Naive thymus-derived CD4-positive, alpha-beta T cell (primary cell): ENCODE measurements at regions of chr3 and their contacts with region 1.

Region 1: DNA sequence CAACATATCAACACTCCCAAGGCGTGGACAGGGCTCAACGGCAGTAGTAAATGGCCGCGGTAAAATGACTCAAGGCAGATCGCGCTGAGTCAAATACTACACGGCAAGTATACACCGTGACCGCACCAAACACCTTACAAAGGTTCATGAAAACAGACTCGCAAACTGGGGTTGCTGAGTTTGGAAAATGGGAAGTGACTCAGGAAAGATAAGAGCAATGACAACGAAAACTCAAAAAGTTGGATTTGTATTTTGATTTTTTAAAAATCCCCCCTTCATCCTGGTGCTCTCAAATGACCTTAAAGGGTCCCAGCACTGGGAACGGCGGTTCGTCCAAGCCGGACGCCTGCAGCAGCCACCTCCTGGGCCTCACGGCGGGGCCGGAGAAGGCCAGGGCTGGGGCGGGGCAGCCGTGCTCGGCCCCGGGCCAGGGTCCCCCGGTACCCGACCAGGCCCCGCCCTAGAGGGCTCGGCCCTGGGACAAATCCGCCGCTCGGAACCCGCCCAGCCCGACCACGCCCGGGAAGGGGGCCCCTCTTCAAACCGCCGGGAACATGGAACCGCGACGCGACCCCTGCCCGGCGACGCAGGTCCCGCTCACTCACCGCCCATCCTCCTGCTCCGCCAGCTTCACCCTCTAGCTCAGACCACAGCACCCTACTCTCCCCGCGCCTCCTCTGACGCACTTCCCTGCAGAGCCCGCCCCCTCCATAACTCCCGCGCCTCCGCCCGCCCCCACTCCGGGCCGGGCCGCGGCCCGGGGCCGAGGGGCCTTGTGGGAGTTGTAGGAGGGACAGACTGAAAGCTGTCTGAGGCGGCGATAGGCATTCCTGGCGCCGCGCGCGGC is at the start of gene CLDND1:
- DNase-seq: peak; percentile 88 to 94 (median 93)
- ATAC-seq: peak; percentile 99
- H3K4me3 ChIP-seq: peak within 1 kb of the TSS; percentile 68
- H3K4me3 Mint-ChIP-seq: peak within 1 kb of the TSS; percentile 83 to 99 (median 92)
- H3K27ac ChIP-seq: peak within 1 kb of the TSS; percentile 90
- H3K27ac Mint-ChIP-seq: peak within 1 kb of the TSS; percentile 67 to 99 (median 96)
- H3K4me1 ChIP-seq: peaks cover 16 to 27% of the 10 kb centered on the region in 2 donors
- H3K4me1 Mint-ChIP-seq: peaks cover 31 to 62% (median 53%) of the 10 kb centered on the region in 7 donors
- H3K27me3 ChIP-seq: no peaks in the 10 kb centered on the region
- H3K27me3 Mint-ChIP-seq: no peaks in the 10 kb centered on the region
- total RNA-seq, gene CLDND1: 100 to 478 (median 132) TPM

Region 2: DNA sequence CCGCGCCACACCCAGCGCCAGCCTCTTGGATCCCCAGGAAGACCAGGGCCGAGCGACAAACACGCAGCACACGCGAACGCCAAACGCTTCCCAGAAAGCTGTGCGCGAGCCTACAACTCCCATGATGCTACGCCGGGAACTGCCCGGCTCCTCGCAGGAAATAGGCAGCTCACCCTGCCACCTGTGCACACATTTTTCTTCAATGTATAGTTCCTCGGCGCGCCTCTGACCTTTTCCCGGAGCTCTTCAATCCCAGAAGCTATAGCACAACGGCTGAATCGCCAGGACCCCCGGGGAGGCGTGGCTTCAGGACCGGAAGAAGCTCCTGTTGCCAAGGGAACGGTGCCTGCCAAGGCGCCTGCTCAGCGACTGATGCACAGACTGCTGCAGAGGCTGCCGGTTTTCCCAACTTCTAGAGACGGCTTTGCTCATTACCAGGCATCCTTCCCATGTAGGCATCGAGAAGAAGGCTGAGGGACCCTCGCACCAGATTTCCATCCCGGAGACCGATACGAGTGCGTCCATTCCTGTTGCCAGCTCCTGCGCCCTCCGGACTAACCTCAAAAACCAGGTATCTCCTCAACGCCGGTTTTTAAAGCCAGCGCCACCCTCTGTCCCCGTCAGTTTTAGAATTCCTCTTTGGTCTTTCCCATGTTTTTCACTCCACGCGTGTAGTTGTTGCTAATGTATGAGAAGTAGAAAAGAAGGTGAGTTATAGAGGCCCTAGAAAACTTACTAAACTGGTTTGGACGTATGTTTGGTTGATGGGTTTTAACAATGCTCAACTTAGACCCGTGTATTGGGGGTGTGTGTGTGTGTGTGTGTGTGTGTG is 757.8 kb before region 1 on chr3 and contains the start of gene ARL6:
- CTCF ChIA-PET with region 1: no interaction called
- POLR2A ChIA-PET with region 1: interaction called, 4 read pairs
- intact Hi-C with region 1: loop called (anchors 1 kb)
- DNase-seq: peak; percentile 53 to 78 (median 73)
- ATAC-seq: peak; percentile 95
- H3K4me3 ChIP-seq: peak within 1 kb of the TSS; percentile 98
- H3K4me3 Mint-ChIP-seq: peak within 1 kb of the TSS; percentile 91 to 99 (median 98)
- H3K27ac ChIP-seq: peak within 1 kb of the TSS; percentile 78
- H3K27ac Mint-ChIP-seq: peak within 1 kb of the TSS; percentile 90 to 97 (median 93)
- H3K4me1 ChIP-seq: peaks cover 5 to 15% of the 10 kb centered on the region in 2 donors
- H3K4me1 Mint-ChIP-seq: peaks cover 9 to 36% (median 27%) of the 10 kb centered on the region in 7 donors
- H3K27me3 ChIP-seq: no peaks in the 10 kb centered on the region
- H3K27me3 Mint-ChIP-seq: peaks cover 0 to 4% (median 0%) of the 10 kb centered on the region in 5 donors
- total RNA-seq, gene ARL6: 3.0 to 7.5 (median 5.8) TPM

Region 3: GRCh38 chr3:98343647-98344507 is 178.6 kb before region 1 on chr3:
- CTCF ChIA-PET with region 1: no interaction called
- POLR2A ChIA-PET with region 1: no interaction called
- intact Hi-C with region 1: loop called in 1 of 2 experiments (anchors 5 kb)
- DNase-seq: peak in 4 of 9 donors; percentile 7 to 25 (median 18)
- ATAC-seq: no peak
- H3K4me3 ChIP-seq: no peak overlapping the region
- H3K4me3 Mint-ChIP-seq: no peak overlapping the region
- H3K27ac ChIP-seq: no peak overlapping the region
- H3K27ac Mint-ChIP-seq: no peak overlapping the region
- H3K4me1 ChIP-seq: no peaks in the 10 kb centered on the region
- H3K4me1 Mint-ChIP-seq: peaks cover 0 to 10% (median 0%) of the 10 kb centered on the region in 7 donors
- H3K27me3 ChIP-seq: no peaks in the 10 kb centered on the region
- H3K27me3 Mint-ChIP-seq: peaks cover 3 to 60% (median 6%) of the 10 kb centered on the region in 5 donors

Region 4: DNA sequence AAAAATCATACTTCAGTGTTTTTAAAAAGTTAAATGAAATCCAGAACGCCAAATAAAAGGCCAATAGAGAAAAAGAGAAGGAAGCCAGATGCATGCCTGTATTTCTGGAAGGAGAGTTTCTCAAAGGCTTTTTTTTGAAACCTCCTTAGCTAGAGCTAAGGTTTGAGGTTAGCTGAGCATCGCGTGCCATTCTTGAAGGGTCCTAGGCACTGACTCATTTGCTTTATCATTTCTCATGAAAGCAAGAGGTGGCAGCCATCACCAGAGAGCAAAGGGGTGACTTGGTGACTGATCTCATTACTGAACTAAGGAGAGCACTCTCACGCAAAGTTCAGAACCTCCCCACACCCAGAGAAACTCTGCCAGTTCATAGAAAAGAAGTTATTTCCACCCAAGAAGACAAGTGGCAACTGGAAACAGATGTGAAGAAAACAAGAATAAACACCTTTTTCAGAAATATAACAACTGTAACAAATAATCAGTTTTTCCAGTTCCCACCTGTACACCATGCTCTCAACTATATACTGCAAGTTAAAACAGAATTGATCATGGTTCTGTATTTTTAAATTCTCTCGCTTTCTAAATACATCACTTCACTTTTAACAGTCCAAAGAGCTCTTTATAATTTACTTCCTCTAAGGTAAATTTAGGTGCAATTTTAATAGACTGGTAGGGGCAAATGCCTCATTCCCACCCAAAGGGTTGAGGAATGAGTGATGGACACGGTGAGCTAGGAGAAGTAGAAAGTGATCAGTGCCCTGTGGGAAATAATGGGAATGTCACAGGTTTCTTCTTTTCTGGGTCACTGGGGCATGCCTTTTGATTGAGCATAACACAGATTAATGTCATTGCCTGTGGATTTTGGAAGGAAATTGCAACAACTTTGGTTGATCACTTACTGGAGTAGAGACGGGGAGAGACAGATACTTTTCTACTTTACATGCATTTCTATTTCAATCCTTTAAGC is 34.0 kb after region 1 on chr3:
- CTCF ChIA-PET with region 1: no interaction called
- POLR2A ChIA-PET with region 1: interaction called, 9 read pairs
- intact Hi-C with region 1: loop called (anchors 1 kb)
- DNase-seq: peak in 2 of 9 donors; percentile 19 to 58
- ATAC-seq: peak; percentile 77
- H3K4me3 ChIP-seq: no peak overlapping the region
- H3K4me3 Mint-ChIP-seq: peak overlapping the region in 3 of 10 donors; percentile 9 to 83 (median 30)
- H3K27ac ChIP-seq: no peak overlapping the region
- H3K27ac Mint-ChIP-seq: peak overlapping the region in 5 of 9 donors; percentile 5 to 98 (median 40)
- H3K4me1 ChIP-seq: peaks cover 0 to 56% of the 10 kb centered on the region in 2 donors
- H3K4me1 Mint-ChIP-seq: peaks cover 6 to 84% (median 23%) of the 10 kb centered on the region in 7 donors
- H3K27me3 ChIP-seq: no peaks in the 10 kb centered on the region
- H3K27me3 Mint-ChIP-seq: peaks cover 0 to 5% (median 0%) of the 10 kb centered on the region in 5 donors

Region 5: GRCh38 chr3:98901392-98902350 is 379.2 kb after region 1 on chr3 and contains the start of gene DCBLD2:
- CTCF ChIA-PET with region 1: no interaction called
- POLR2A ChIA-PET with region 1: no interaction called
- intact Hi-C with region 1: loop called (anchors 1 to 5 kb)
- DNase-seq: peak; percentile 90 to 96 (median 94)
- ATAC-seq: peak; percentile 99
- H3K4me3 ChIP-seq: peak within 1 kb of the TSS; percentile 86
- H3K4me3 Mint-ChIP-seq: peak within 1 kb of the TSS; percentile 89 to 97 (median 94)
- H3K27ac ChIP-seq: peak within 1 kb of the TSS; percentile 78
- H3K27ac Mint-ChIP-seq: peak within 1 kb of the TSS; percentile 44 to 96 (median 86)
- H3K4me1 ChIP-seq: peaks cover 5% of the 10 kb centered on the region in 2 donors
- H3K4me1 Mint-ChIP-seq: peaks cover 14 to 27% (median 22%) of the 10 kb centered on the region in 7 donors
- H3K27me3 ChIP-seq: no peaks in the 10 kb centered on the region
- H3K27me3 Mint-ChIP-seq: peaks cover 0 to 30% (median 8%) of the 10 kb centered on the region in 5 donors
- total RNA-seq, gene DCBLD2: 1.9 to 4.7 (median 2.9) TPM

Region 6: GRCh38 chr3:100334488-100335351 is 1812.3 kb after region 1 on chr3 and contains the start of gene NIT2:
- CTCF ChIA-PET with region 1: no interaction called
- POLR2A ChIA-PET with region 1: no interaction called
- intact Hi-C with region 1: loop called in 1 of 2 experiments (anchors 2 kb)
- DNase-seq: peak; percentile 49 to 79 (median 65)
- ATAC-seq: peak; percentile 97
- H3K4me3 ChIP-seq: peak within 1 kb of the TSS; percentile 72
- H3K4me3 Mint-ChIP-seq: peak within 1 kb of the TSS; percentile 86 to 99 (median 94)
- H3K27ac ChIP-seq: peak within 1 kb of the TSS; percentile 76
- H3K27ac Mint-ChIP-seq: peak within 1 kb of the TSS; percentile 87 to 97 (median 93)
- H3K4me1 ChIP-seq: peaks cover 8 to 12% of the 10 kb centered on the region in 2 donors
- H3K4me1 Mint-ChIP-seq: peaks cover 11 to 40% (median 30%) of the 10 kb centered on the region in 7 donors
- H3K27me3 ChIP-seq: no peaks in the 10 kb centered on the region
- H3K27me3 Mint-ChIP-seq: no peaks in the 10 kb centered on the region
- total RNA-seq, gene NIT2: 25.3 to 51.6 (median 30.6) TPM